Dendritic cell treated with granulocyte-macrophage colony-stimulating factor and Interleukin-4, amounts not matched to agents 40 ng/mL and 50 ng/mL, for 4 days (primary cell): ENCODE measurements at regions of chr5 and their contacts with region 1.

Region 1: DNA sequence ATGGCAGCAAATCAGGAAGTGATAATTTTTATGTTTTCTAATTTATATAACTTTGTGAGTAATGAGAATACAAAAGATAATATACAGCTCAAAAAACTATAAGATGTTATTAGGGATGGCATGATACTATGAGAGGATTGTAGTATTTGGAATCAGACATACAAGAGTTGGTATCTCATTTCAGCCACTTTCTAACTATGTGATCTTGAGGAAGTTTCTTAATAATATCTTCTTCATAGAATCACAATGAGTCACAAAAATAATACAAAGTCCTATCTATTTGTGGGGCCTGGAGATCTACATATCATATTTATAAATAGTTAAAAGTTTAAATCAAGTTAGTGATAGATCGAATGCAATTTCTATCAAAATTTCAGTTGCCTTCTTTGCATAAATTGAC is 23.7 kb upstream of the TMED7 start:
- H3K4me3 Mint-ChIP-seq: no peak overlapping the region
- H3K27ac Mint-ChIP-seq: no peak overlapping the region
- H3K4me1 Mint-ChIP-seq: no peaks in the 10 kb centered on the region
- H3K27me3 Mint-ChIP-seq: peaks cover 6% of the 10 kb centered on the region

Region 2: DNA sequence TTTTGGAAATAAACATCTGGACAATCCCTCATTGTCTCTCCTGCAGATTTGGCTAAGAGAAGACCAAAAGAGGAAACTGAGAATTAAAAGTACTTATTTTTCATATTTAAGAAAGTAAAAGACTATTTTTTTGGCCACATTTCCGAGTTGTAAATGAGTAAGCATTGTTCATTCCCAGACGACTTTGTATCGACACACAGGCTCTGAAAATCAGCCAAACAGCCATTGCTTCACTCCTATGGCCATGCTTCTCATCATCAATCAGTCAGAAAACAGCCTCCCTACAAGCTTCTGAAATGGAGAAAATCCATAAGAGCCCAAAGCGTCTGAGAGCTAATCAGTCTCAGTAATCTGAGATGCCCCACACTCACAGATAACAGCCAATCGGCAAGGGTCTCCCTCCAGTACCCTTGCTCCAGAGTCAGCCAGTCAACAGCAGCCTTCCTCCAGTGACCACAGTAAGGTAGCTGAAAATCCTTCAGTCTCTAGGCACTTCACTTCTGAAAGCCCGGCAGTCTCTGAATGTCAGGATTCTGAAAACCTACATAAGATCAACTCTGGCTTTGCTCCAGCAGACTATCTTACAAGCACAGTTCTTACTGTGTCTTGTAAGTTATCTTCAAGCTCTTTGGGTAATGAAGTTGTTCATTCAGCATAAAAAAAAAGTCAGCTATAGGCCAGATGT is 136.0 kb after region 1 on chr5:
- intact Hi-C with region 1: no loop called
- H3K4me3 Mint-ChIP-seq: no peak overlapping the region
- H3K27ac Mint-ChIP-seq: no peak overlapping the region
- H3K4me1 Mint-ChIP-seq: no peaks in the 10 kb centered on the region
- H3K27me3 Mint-ChIP-seq: peaks cover 11% of the 10 kb centered on the region

Region 3: GRCh38 chr5:115816226-115817081 is 166.9 kb after region 1 on chr5 and contains the start of gene CDO1:
- intact Hi-C with region 1: loop called (anchors 5 kb)
- H3K4me3 Mint-ChIP-seq: peak within 1 kb of the TSS; percentile 49
- H3K27ac Mint-ChIP-seq: no peak within 1 kb of the TSS
- H3K4me1 Mint-ChIP-seq: peaks cover 22% of the 10 kb centered on the region
- H3K27me3 Mint-ChIP-seq: peaks cover 73% of the 10 kb centered on the region